PC-3 (cell line): ENCODE measurements at regions of chr4 and their contacts with region 1.

Region 1: DNA sequence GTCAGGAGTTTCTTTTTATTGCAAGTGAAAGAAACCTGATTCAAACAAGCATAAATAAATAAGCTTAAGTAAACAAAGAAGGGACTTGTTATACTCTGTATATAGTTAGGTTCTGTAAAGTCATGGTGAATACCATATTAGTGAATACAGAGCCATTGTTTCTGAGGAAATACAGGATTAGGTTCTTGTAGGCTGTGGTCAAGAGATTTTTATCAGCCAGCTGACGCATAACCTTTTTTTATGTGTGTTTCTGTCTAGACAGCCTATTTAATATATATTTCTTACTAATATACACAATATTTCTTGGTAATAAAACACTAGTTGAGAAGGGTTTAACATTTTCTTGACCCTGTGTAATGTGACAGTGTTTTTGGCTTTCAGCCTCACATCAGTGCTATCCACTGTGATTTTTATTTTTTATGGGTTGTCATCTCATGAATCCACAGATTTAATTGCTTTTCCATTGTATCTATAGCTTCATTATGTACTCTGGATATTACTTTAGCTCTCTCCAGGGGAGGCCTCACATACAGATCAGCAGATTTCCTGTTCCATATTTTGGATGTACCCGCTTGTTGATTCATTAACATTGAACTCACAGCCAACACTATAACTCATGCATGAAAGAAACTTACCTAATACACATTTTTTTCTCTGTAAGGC is 8.0 kb downstream of the HERC3 start:
- DNase-seq: peak; percentile 89
- ATAC-seq: peak; percentile 92
- H3K4me3 ChIP-seq: peak overlapping the region; percentile 63; the same call in 1 of the 2 replicates
- H3K27ac ChIP-seq: peak overlapping the region; percentile 94
- H3K4me1 ChIP-seq: peaks cover 33% of the 10 kb centered on the region
- H3K27me3 ChIP-seq: no peaks in the 10 kb centered on the region
- CTCF ChIP-seq: no peak

Region 2: GRCh38 chr4:88613417-88613875 is 13.1 kb after region 1 on chr4:
- CTCF ChIA-PET with region 1: no interaction called
- POLR2A ChIA-PET with region 1: no interaction called
- intact Hi-C with region 1: loop called (anchors 1 kb)
- DNase-seq: no peak
- ATAC-seq: no peak
- H3K4me3 ChIP-seq: no peak overlapping the region
- H3K27ac ChIP-seq: peak overlapping the region; percentile 99
- H3K4me1 ChIP-seq: peaks cover 72% of the 10 kb centered on the region
- H3K27me3 ChIP-seq: no peaks in the 10 kb centered on the region
- CTCF ChIP-seq: no peak

Region 3: GRCh38 chr4:88728146-88728545 is 127.8 kb after region 1 on chr4:
- CTCF ChIA-PET with region 1: no interaction called
- POLR2A ChIA-PET with region 1: no interaction called
- intact Hi-C with region 1: no loop called
- DNase-seq: no peak
- ATAC-seq: no peak
- H3K4me3 ChIP-seq: no peak overlapping the region
- H3K27ac ChIP-seq: no peak overlapping the region
- H3K4me1 ChIP-seq: 0 out of 2 replicates have a peak, but pooled peaks cover 6% of the 10 kb centered on the region
- H3K27me3 ChIP-seq: no peaks in the 10 kb centered on the region
- CTCF ChIP-seq: no peak